B cell (primary cell): ENCODE measurements at regions of chrX and their contacts with region 1.

Region 1: DNA sequence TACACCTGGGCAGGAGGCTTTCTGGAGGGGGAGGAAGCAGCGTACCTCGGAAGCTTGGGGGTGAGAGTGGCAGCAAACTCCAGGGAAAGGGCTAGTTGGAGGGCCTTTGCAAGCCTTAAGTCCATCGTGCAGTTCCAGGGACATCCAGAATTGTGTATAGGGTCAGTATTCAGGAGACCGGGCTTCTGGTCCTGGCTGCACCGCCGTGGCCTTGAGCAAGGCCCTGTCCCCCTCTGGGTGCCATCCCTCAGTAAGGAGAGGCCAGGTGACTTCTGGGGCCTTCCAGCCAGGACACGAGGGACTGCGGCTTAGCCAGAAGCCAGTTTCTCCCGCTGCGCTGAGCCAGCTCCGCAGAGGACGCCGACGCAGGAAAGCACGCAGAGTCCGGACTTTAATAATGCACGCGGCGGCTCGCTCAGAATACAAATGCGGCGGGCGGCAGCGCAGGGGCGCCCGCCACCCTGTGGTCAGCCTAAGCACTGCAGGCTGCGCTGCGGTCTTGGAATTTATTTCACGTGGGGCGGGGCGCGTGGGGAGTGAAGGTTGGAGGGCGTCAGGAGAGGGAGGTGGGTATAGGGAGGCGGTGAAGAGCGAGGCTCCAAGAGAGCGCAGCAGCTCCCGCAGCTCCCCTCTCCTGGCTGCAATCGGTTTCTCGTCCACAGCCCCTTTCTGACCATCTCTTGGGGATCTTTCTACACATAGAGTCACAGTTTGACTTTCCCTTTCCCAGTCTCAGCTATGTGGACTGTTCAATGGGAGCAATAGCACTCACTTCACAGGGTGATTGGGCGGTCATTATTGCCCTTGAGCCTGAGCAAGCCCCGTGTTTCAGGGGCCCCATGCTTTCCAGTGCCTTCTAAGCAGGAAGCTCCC is 94.1 kb upstream of the GPR50 start:
- DNase-seq: peak; percentile 60
- ATAC-seq: peak; percentile 87
- H3K4me3 ChIP-seq: no peak overlapping the region
- H3K4me3 Mint-ChIP-seq: peak overlapping the region; percentile 23
- H3K27ac ChIP-seq: no peak overlapping the region
- H3K27ac Mint-ChIP-seq: no peak overlapping the region
- H3K4me1 ChIP-seq: peaks cover 5 to 8% of the 10 kb centered on the region in 2 donors
- H3K4me1 Mint-ChIP-seq: peaks cover 8% of the 10 kb centered on the region
- H3K27me3 ChIP-seq: peaks cover 0 to 13% (median 3%) of the 10 kb centered on the region in 4 experiments
- H3K27me3 Mint-ChIP-seq: peaks cover 22% of the 10 kb centered on the region
- CTCF ChIP-seq: peak; percentile 79

Region 2: DNA sequence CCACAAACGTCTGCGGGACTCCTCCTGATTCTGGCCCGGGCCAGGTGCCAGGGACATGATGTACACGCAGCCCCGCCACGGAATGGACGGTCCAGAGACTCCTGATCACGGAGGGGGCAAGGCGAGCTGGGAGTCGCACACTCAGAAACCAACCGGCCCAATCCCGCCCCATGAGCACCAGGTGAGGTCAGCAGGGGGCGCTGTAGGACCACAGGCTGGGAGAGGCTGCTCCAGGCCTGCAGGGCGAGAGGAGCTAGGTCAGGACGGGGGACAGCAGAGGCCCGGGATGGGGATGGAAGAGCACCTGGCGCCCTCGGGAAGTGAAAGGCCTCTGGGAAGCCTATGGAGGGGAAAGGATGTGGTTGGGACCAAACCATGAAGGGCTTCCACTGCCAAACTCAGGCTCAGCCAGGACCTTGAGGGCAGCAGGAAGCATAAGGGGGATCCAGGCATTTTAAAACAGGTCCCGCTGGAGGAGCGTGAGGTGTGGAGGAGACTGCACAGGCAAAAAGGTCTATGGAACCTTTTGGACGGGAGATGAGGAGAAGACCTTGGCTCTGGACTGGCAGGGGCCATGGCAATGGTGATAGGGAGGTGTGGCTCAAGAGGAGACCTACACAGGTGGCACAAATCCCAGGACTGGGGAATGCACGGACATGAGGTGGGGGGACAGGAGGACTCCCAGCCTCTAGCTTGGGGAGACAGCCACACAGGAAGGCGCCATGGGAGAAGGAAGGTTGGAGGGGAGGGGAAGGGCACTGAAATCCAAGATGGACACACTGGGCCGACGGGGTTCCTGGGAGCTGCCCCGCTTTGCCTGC is 310.0 kb before region 1 on chrX:
- CTCF ChIA-PET with region 1: interaction called, 126 read pairs
- POLR2A ChIA-PET with region 1: no interaction called
- intact Hi-C with region 1: no loop called
- DNase-seq: peak; percentile 65
- ATAC-seq: peak; percentile 71
- H3K4me3 ChIP-seq: no peak overlapping the region
- H3K4me3 Mint-ChIP-seq: no peak overlapping the region
- H3K27ac ChIP-seq: no peak overlapping the region
- H3K27ac Mint-ChIP-seq: no peak overlapping the region
- H3K4me1 ChIP-seq: no peaks in the 10 kb centered on the region
- H3K4me1 Mint-ChIP-seq: no peaks in the 10 kb centered on the region
- H3K27me3 ChIP-seq: no peaks in the 10 kb centered on the region
- H3K27me3 Mint-ChIP-seq: no peaks in the 10 kb centered on the region
- CTCF ChIP-seq: peak; percentile 68

Region 3: GRCh38 chrX:151042842-151043241 is 39.5 kb before region 1 on chrX:
- CTCF ChIA-PET with region 1: no interaction called
- POLR2A ChIA-PET with region 1: no interaction called
- intact Hi-C with region 1: no loop called
- DNase-seq: no peak
- ATAC-seq: no peak
- H3K4me3 ChIP-seq: no peak overlapping the region
- H3K4me3 Mint-ChIP-seq: no peak overlapping the region
- H3K27ac ChIP-seq: no peak overlapping the region
- H3K27ac Mint-ChIP-seq: no peak overlapping the region
- H3K4me1 ChIP-seq: no peaks in the 10 kb centered on the region
- H3K4me1 Mint-ChIP-seq: no peaks in the 10 kb centered on the region
- H3K27me3 ChIP-seq: no peaks in the 10 kb centered on the region
- H3K27me3 Mint-ChIP-seq: peaks cover 4% of the 10 kb centered on the region
- CTCF ChIP-seq: no peak

Region 4: GRCh38 chrX:151396825-151397740 is 314.8 kb after region 1 on chrX and contains the start of gene VMA21:
- CTCF ChIA-PET with region 1: no interaction called
- POLR2A ChIA-PET with region 1: no interaction called
- intact Hi-C with region 1: no loop called
- DNase-seq: peak; percentile 90
- ATAC-seq: peak; percentile 89
- H3K4me3 ChIP-seq: peak within 1 kb of the TSS; percentile 48 to 82 (median 77)
- H3K4me3 Mint-ChIP-seq: peak within 1 kb of the TSS; percentile 90
- H3K27ac ChIP-seq: peak within 1 kb of the TSS; percentile 96 to 98
- H3K27ac Mint-ChIP-seq: peak within 1 kb of the TSS; percentile 96
- H3K4me1 ChIP-seq: peaks cover 5 to 22% of the 10 kb centered on the region in 2 donors
- H3K4me1 Mint-ChIP-seq: peaks cover 52% of the 10 kb centered on the region
- H3K27me3 ChIP-seq: no peaks in the 10 kb centered on the region
- H3K27me3 Mint-ChIP-seq: no peaks in the 10 kb centered on the region
- CTCF ChIP-seq: no peak
- total RNA-seq, gene VMA21: 22.6 and 22.7 TPM in 2 replicates